Endothelial cell of umbilical vein (primary cell): ENCODE measurements at regions of chr4 and their contacts with region 1.

Region 1: DNA sequence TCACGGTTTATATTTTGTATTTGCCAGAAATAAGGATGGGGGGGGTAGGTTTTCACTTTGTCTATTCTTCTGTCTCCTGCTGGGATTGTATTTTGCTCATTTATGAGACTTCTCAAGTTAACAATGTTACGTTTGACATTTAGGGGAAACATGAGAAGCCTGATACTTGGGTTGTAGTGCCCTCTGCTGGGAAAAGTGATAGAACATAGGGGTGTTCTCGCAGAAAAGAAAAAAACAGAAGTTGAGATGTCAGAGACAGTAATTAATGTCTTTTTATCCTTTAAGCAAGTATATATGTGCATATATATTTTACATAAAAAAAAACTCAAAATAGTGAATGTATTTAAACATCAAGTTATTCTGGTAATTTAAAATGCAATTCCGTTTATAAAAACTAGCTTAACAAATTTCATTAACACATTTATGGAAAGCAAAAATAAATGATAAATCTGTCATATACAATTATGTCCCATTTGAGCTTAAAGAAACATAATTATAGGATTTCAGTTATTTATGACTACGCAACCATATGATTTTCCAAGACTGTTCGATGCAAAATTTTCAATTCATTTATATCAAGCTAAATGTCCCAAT is 46.0 kb upstream of the TMPRSS11F start:
- DNase-seq: peak; percentile 67
- H3K4me3 ChIP-seq: no peak overlapping the region
- H3K27ac ChIP-seq: no peak overlapping the region
- H3K4me1 ChIP-seq: no peaks in the 10 kb centered on the region
- H3K27me3 ChIP-seq: no peaks in the 10 kb centered on the region
- CTCF ChIP-seq: peak; percentile 23 to 39
- POLR2A ChIP-seq: no peak

Region 2: GRCh38 chr4:67871867-67872266 is 303.8 kb before region 1 on chr4:
- CTCF ChIA-PET with region 1: interaction called, 19 read pairs
- POLR2A ChIA-PET with region 1: no interaction called
- dilution Hi-C with region 1: no loop called
- intact Hi-C with region 1: loop called (anchors 1 kb)
- DNase-seq: peak; percentile 74
- H3K4me3 ChIP-seq: no peak overlapping the region
- H3K27ac ChIP-seq: no peak overlapping the region
- H3K4me1 ChIP-seq: no peaks in the 10 kb centered on the region
- H3K27me3 ChIP-seq: no peaks in the 10 kb centered on the region
- CTCF ChIP-seq: peak; percentile 28 to 41
- POLR2A ChIP-seq: no peak

Region 3: GRCh38 chr4:67918428-67918827 is 257.2 kb before region 1 on chr4:
- CTCF ChIA-PET with region 1: interaction called, 3 read pairs
- POLR2A ChIA-PET with region 1: no interaction called
- dilution Hi-C with region 1: no loop called
- intact Hi-C with region 1: loop called (anchors 1 kb)
- DNase-seq: no peak
- H3K4me3 ChIP-seq: no peak overlapping the region
- H3K27ac ChIP-seq: no peak overlapping the region
- H3K4me1 ChIP-seq: no peaks in the 10 kb centered on the region
- H3K27me3 ChIP-seq: peaks cover 0 to 4% of the 10 kb centered on the region in 2 experiments
- CTCF ChIP-seq: peak in 1 of 2 donors; percentile 17
- POLR2A ChIP-seq: no peak

Region 4: GRCh38 chr4:67988991-67989390 is 186.7 kb before region 1 on chr4:
- CTCF ChIA-PET with region 1: interaction called, 3 read pairs
- POLR2A ChIA-PET with region 1: no interaction called
- dilution Hi-C with region 1: no loop called
- intact Hi-C with region 1: loop called (anchors 1 kb)
- DNase-seq: no peak
- H3K4me3 ChIP-seq: no peak overlapping the region
- H3K27ac ChIP-seq: no peak overlapping the region
- H3K4me1 ChIP-seq: no peaks in the 10 kb centered on the region
- H3K27me3 ChIP-seq: no peaks in the 10 kb centered on the region
- CTCF ChIP-seq: no peak
- POLR2A ChIP-seq: no peak

Region 5: GRCh38 chr4:68404153-68404552 is 228.5 kb after region 1 on chr4:
- CTCF ChIA-PET with region 1: no interaction called
- POLR2A ChIA-PET with region 1: no interaction called
- dilution Hi-C with region 1: no loop called
- intact Hi-C with region 1: no loop called
- DNase-seq: no peak
- H3K4me3 ChIP-seq: no peak overlapping the region
- H3K27ac ChIP-seq: no peak overlapping the region
- H3K4me1 ChIP-seq: no peaks in the 10 kb centered on the region
- H3K27me3 ChIP-seq: peaks cover 0 to 4% of the 10 kb centered on the region in 2 experiments
- CTCF ChIP-seq: no peak
- POLR2A ChIP-seq: no peak